Right cardiac atrium (tissue), 5 donors: ENCODE measurements at regions of chr17 and their contacts with region 1.

Region 1: GRCh38 chr17:78781948-78782916 is at the start of gene CYTH1:
- DNase-seq: peak; percentile 95 to 99 (median 98)
- ATAC-seq: peak; percentile 94 to 97
- H3K4me3 ChIP-seq: peak within 1 kb of the TSS; percentile 98
- H3K27ac ChIP-seq: peak within 1 kb of the TSS; percentile 90
- H3K4me1 ChIP-seq: no peaks in the 10 kb centered on the region
- H3K27me3 ChIP-seq: no peaks in the 10 kb centered on the region
- total RNA-seq, gene CYTH1: 31.2 to 39.1 (median 36.7) TPM

Region 2: GRCh38 chr17:78645421-78646295 is 136.6 kb before region 1 on chr17:
- intact Hi-C with region 1: no loop called
- DNase-seq: peak; percentile 86 to 93 (median 92)
- ATAC-seq: peak; percentile 86 to 96
- H3K4me3 ChIP-seq: no peak overlapping the region
- H3K27ac ChIP-seq: peak overlapping the region; percentile 11
- H3K4me1 ChIP-seq: no peaks in the 10 kb centered on the region
- H3K27me3 ChIP-seq: no peaks in the 10 kb centered on the region

Region 3: DNA sequence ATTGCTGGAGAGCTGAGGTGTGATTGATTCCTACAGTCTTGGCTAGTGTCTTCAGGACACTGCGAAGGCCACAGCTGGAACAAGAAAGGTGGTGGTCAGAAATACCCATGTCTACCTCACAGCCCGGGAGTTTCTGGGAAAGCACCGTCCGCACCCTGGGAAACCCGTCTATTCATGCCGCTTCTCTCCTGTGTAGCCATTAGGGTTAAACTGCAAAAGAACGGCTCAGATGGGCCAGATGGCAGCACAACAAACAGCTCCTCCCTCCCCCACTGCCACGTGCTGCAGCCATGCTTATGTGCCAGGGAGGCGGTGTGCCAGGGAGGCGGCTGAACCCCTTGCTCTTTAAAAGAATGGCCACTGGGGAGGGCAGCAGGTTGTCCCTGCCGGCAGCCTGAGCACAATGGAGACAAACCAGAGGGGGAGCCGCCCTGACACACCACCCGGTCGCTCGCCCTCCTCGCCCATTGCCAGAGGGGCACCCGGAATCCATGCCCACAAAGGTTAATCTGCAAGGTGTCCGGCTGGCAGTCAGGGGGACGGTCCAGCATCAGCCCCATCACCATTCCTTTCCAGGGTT is 65.3 kb before region 1 on chr17:
- intact Hi-C with region 1: loop called in 1 of 4 experiments (anchors 10 kb)
- DNase-seq: peak; percentile 73 to 89 (median 88)
- ATAC-seq: peak; percentile 84 to 87
- H3K4me3 ChIP-seq: peak overlapping the region; percentile 37
- H3K27ac ChIP-seq: peak overlapping the region; percentile 70
- H3K4me1 ChIP-seq: peaks cover 14% of the 10 kb centered on the region
- H3K27me3 ChIP-seq: no peaks in the 10 kb centered on the region

Region 4: GRCh38 chr17:78736526-78737079 is 45.6 kb before region 1 on chr17:
- intact Hi-C with region 1: loop called in 1 of 4 experiments (anchors 10 kb)
- DNase-seq: peak; percentile 79 to 87 (median 85)
- ATAC-seq: peak; percentile 87 to 91
- H3K4me3 ChIP-seq: peak overlapping the region; percentile 66
- H3K27ac ChIP-seq: peak overlapping the region; percentile 94
- H3K4me1 ChIP-seq: peaks cover 34% of the 10 kb centered on the region
- H3K27me3 ChIP-seq: no peaks in the 10 kb centered on the region